Heart left ventricle (tissue), 16 donors: ENCODE measurements at regions of chr2 and their contacts with region 1.

Region 1: GRCh38 chr2:13006829-13007717 is 290.3 kb downstream of the TRIB2 start:
- DNase-seq: peak in 4 of 5 donors; percentile 46 to 66 (median 64)
- ATAC-seq: peak; percentile 85 to 92 (median 90)
- H3K4me3 ChIP-seq: peak overlapping the region in 10 of 12 donors; percentile 8 to 54 (median 31)
- H3K27ac ChIP-seq: peak overlapping the region in 11 of 12 donors; percentile 1 to 60 (median 46)
- H3K4me1 ChIP-seq: peaks cover 0 to 42% (median 17%) of the 10 kb centered on the region in 12 donors
- H3K27me3 ChIP-seq: no peaks in the 10 kb centered on the region
- CTCF ChIP-seq: peak; percentile 82 to 93 (median 90)
- POLR2A ChIP-seq: no peak

Region 2: GRCh38 chr2:11829947-11830707 is 1176.9 kb before region 1 on chr2:
- intact Hi-C with region 1: loop called (anchors 2 to 10 kb)
- DNase-seq: peak; percentile 69 to 79 (median 75)
- ATAC-seq: peak; percentile 85 to 92 (median 88)
- H3K4me3 ChIP-seq: peak overlapping the region in 10 of 12 donors; percentile 9 to 42 (median 24)
- H3K27ac ChIP-seq: peak overlapping the region in 11 of 12 donors; percentile 55 to 82 (median 71)
- H3K4me1 ChIP-seq: peaks cover 4 to 37% (median 21%) of the 10 kb centered on the region in 12 donors
- H3K27me3 ChIP-seq: no peaks in the 10 kb centered on the region
- CTCF ChIP-seq: peak in 9 of 12 donors; percentile 21 to 55 (median 39)
- POLR2A ChIP-seq: no peak

Region 3: GRCh38 chr2:11967946-11968465 is 1039.1 kb before region 1 on chr2:
- intact Hi-C with region 1: loop called in 1 of 10 experiments (anchors 5 kb)
- DNase-seq: peak; percentile 57 to 81 (median 67)
- ATAC-seq: peak; percentile 77 to 97 (median 85)
- H3K4me3 ChIP-seq: no peak overlapping the region
- H3K27ac ChIP-seq: no peak overlapping the region
- H3K4me1 ChIP-seq: peaks cover 0 to 16% (median 9%) of the 10 kb centered on the region in 12 donors
- H3K27me3 ChIP-seq: no peaks in the 10 kb centered on the region
- CTCF ChIP-seq: no peak
- POLR2A ChIP-seq: no peak

Region 4: GRCh38 chr2:12236136-12236844 is 770.8 kb before region 1 on chr2:
- intact Hi-C with region 1: loop called in 1 of 10 experiments (anchors 10 kb)
- DNase-seq: no peak
- ATAC-seq: no peak
- H3K4me3 ChIP-seq: no peak overlapping the region
- H3K27ac ChIP-seq: no peak overlapping the region
- H3K4me1 ChIP-seq: peaks cover 0 to 18% (median 0%) of the 10 kb centered on the region in 12 donors
- H3K27me3 ChIP-seq: no peaks in the 10 kb centered on the region
- CTCF ChIP-seq: no peak
- POLR2A ChIP-seq: no peak

Region 5: GRCh38 chr2:12303181-12304030 is 703.7 kb before region 1 on chr2:
- intact Hi-C with region 1: no loop called
- DNase-seq: no peak
- ATAC-seq: no peak
- H3K4me3 ChIP-seq: no peak overlapping the region
- H3K27ac ChIP-seq: no peak overlapping the region
- H3K4me1 ChIP-seq: peaks cover 0 to 7% (median 2%) of the 10 kb centered on the region in 12 donors
- H3K27me3 ChIP-seq: no peaks in the 10 kb centered on the region
- CTCF ChIP-seq: no peak
- POLR2A ChIP-seq: no peak

Region 6: DNA sequence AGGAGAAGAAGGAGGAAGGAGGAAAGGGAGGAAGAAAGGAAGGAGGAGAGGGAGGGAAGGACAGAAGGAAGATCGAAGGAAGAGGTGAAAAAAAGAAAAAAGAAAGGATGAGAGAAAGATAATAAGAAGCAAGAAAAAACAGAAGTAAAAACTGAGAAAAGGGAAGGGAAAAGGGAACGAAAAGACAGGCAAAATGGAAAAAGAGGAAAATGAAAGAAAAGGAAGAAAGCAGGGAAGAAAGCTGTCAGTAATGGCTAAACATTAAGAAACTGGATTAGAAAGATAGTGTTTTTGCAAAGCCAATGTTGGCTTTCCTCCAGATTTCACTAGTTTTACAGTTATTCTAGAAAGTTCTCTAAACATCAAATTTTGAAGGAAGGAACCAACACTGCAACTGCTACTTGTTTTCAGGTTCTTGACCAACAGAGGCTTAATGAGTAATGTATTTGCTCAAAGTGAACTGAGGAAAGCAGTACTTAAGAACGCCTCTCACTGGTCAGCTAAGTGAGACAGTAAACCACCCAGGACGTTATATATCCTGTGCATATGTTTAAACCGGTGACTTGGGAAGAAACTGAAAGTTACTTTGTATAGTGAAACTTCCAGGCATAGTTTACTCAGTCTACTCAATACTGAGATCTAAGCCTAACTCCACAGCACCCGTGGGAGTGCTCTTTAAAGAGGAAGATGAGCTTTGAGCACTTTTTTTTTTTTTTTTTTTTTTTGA is 576.5 kb before region 1 on chr2:
- intact Hi-C with region 1: loop called in 1 of 10 experiments (anchors 10 kb)
- DNase-seq: no peak
- ATAC-seq: peak in 2 of 4 donors; percentile 36 to 42
- H3K4me3 ChIP-seq: peak overlapping the region in 1 of 12 donors; percentile 12
- H3K27ac ChIP-seq: peak overlapping the region in 1 of 12 donors; percentile 66
- H3K4me1 ChIP-seq: peaks cover 0 to 14% (median 2%) of the 10 kb centered on the region in 12 donors
- H3K27me3 ChIP-seq: no peaks in the 10 kb centered on the region
- CTCF ChIP-seq: no peak
- POLR2A ChIP-seq: no peak

Region 7: DNA sequence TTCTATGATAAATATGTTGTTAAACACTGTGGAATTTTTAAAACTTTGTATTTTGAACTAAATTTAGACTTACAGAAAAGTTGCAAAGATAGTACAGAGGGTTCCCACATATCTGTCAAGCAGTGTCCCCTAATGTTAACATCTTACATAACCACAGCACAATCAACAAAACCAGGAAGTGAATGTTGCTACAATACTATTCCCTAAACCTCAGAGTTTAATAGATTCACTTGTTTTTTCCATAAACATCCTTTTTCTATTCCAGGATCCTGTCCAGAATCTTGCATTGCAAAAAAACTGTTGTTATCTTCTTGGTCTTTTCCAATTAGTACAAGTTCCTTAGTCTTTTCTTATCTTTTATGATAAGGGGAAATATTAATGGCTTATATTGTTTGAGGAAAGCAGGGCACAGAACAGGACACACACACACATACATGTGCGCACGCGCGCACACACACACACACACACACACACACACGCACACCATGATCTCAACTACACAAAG is 541.4 kb before region 1 on chr2:
- intact Hi-C with region 1: no loop called
- DNase-seq: no peak
- ATAC-seq: peak; percentile 34 to 88 (median 54)
- H3K4me3 ChIP-seq: no peak overlapping the region
- H3K27ac ChIP-seq: peak overlapping the region in 6 of 12 donors; percentile 3 to 64 (median 17)
- H3K4me1 ChIP-seq: peaks cover 0 to 18% (median 5%) of the 10 kb centered on the region in 12 donors
- H3K27me3 ChIP-seq: no peaks in the 10 kb centered on the region
- CTCF ChIP-seq: peak in 1 of 12 donors; percentile 22
- POLR2A ChIP-seq: no peak

Region 8: DNA sequence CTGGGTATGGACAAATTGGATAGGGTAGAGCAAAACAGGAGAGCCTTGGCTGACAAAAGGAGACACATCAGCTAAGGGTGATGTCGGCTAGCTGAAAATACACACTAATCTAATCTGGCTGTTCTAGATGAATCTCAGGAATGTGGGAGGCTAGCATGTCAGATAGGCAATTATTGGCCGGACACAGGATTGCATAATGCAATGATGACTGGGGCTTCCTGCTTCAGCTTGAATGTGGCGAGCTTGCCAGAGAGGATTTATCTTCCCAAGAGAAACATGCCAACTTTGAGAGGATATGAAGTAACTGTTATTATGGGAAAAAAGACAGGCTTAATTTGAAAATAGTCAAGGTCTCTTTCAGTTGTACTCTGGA is 188.0 kb before region 1 on chr2:
- intact Hi-C with region 1: loop called in 5 of 10 experiments (anchors 10 kb)
- DNase-seq: peak in 4 of 5 donors; percentile 87 to 90 (median 88)
- ATAC-seq: peak; percentile 97 to 98 (median 98)
- H3K4me3 ChIP-seq: peak overlapping the region in 1 of 12 donors; percentile 3
- H3K27ac ChIP-seq: peak overlapping the region; percentile 70 to 95 (median 89)
- H3K4me1 ChIP-seq: peaks cover 7 to 61% (median 45%) of the 10 kb centered on the region in 12 donors
- H3K27me3 ChIP-seq: no peaks in the 10 kb centered on the region
- CTCF ChIP-seq: no peak
- POLR2A ChIP-seq: peak in 1 of 2 donors; percentile 45

Region 9: DNA sequence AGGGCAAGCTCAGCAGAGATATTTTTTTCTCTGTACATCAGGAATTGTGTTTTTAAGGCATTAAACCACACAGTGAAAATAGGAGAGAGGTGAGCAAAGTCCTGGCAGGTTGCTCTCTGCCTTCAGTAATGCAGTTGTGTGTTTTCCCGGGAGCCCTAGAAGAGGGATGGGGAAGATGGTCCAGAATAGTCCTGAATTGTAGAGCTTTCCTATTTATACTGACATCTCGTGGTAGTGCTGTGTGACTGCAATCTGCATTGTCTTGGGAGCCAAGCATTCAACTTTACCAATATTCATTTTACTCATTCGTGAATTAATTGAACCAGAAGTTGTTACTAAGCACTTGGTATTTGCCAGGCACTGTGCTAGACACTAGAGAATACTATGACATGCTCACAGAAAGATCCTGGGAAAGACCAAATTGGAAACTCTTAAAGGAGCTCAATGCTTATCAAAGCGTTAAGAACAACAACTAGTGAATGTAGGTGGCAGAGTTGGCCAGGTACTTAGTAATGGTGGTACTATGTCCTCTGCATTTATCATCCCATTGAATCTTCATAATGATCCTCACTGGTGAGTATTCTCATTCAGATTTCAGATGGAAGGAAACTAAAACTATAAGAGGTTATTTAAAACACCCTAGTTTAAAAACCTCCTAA is 75.8 kb before region 1 on chr2:
- intact Hi-C with region 1: loop called in 8 of 10 experiments (anchors 5 to 10 kb)
- DNase-seq: peak in 2 of 5 donors; percentile 23 to 29
- ATAC-seq: peak; percentile 78 to 92 (median 88)
- H3K4me3 ChIP-seq: no peak overlapping the region
- H3K27ac ChIP-seq: peak overlapping the region in 8 of 12 donors; percentile 2 to 45 (median 16)
- H3K4me1 ChIP-seq: peaks cover 6 to 45% (median 25%) of the 10 kb centered on the region in 12 donors
- H3K27me3 ChIP-seq: no peaks in the 10 kb centered on the region
- CTCF ChIP-seq: peak; percentile 81 to 95 (median 93)
- POLR2A ChIP-seq: no peak